PC-9 (cell line): ENCODE measurements at regions of chr2 and their contacts with region 1.

Region 1: DNA sequence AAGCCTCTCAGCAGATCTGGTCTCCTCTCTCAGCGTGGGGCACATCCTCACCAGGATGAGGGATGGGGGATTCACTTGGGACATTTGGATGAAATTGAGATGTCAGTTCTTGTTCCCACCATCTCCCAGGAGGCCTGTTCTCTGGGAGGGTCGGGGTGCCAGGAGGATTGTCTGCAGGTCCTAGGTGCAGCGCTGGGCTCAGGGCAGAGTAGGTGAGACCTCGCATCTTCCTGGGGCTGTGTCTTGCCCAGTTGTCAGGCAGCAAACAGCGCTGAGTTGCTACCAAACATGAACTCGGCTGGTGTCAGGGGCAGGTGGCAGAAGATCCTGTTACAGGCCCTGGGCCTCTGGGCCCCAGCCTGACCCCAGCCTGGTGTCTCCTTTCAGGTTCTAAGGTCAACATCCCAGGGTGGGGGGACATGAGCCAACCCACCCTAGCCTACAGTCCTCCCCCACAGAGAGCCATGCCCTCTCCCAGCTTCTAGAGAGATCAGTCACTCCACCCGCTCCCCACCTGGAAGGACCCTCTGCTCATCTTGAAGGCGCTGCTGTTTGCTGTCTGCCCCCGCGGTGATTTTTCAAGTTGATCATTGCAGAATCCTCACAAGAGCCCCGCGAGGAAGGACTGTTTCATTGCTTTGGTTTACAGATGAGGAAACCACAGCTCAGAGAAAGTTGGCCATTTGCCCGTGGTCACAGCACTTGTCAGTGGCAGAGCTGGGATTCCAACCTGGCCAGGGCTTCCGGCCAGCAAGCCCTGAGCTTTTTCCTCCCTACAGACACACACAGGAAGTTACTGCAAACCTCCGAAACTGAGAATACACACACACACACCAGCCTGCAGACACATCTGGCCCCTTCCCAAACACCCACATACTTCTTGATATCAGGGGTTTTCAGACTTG is 83.9 kb downstream of the STPG4 start:
- DNase-seq: peak; percentile 59 to 68
- H3K4me3 ChIP-seq: no peak overlapping the region
- H3K27ac ChIP-seq: peak overlapping the region; percentile 27
- H3K4me1 ChIP-seq: peaks cover 66% of the 10 kb centered on the region
- H3K27me3 ChIP-seq: no peaks in the 10 kb centered on the region
- CTCF ChIP-seq: no peak

Region 2: DNA sequence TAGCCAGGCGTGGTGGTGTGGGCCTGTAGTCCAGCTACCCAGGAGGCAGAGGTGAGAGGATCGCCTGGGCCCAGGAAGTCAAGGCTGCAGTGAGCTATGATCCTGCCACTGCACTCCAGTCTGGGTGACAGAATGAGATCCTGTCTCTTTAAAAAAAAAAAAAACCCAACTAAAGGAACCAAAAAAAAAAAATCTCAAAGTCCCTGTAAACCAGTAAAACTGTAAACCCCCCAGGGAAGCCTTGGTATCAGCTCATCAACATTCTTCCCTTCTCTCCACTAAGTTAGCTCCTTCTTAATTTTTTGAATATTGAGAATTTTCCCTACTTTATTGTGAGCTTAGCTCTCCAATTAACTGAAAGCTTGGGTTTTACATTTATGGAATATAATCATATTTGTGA is 147.1 kb before region 1 on chr2:
- CTCF ChIA-PET with region 1: interaction called, 6 read pairs
- POLR2A ChIA-PET with region 1: interaction called, 23 read pairs
- intact Hi-C with region 1: no loop called
- DNase-seq: no peak
- H3K4me3 ChIP-seq: no peak overlapping the region
- H3K27ac ChIP-seq: no peak overlapping the region
- H3K4me1 ChIP-seq: peaks cover 60% of the 10 kb centered on the region
- H3K27me3 ChIP-seq: no peaks in the 10 kb centered on the region
- CTCF ChIP-seq: 0 out of 2 replicates have a peak, but pooled peaks have one; percentile 2

Region 3: DNA sequence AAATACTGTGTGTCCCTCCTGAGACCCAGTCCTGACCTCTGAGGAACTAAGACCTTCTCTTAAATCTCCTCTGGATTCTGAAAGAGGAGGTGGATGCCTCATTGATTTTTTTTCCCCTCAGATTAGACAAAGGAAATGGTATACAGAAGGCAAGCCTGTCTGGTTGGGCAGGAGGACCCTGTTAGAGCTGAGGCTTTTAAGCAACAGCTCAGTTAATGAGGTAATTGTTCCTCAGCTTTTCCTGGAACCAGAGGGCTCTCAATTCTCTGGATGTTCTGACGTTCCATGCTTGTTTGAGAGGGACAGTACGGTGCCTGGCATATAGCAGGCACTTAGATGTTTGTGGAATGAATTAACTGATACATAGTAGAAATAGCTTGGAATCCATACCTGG is 93.9 kb before region 1 on chr2:
- CTCF ChIA-PET with region 1: no interaction called
- POLR2A ChIA-PET with region 1: no interaction called
- intact Hi-C with region 1: no loop called
- DNase-seq: no peak
- H3K4me3 ChIP-seq: no peak overlapping the region
- H3K27ac ChIP-seq: no peak overlapping the region
- H3K4me1 ChIP-seq: peaks cover 15% of the 10 kb centered on the region
- H3K27me3 ChIP-seq: no peaks in the 10 kb centered on the region
- CTCF ChIP-seq: no peak

Region 4: GRCh38 chr2:47043142-47043890 is 27.9 kb before region 1 on chr2:
- CTCF ChIA-PET with region 1: interaction called, 4 read pairs
- POLR2A ChIA-PET with region 1: interaction called, 9 read pairs
- intact Hi-C with region 1: loop called (anchors 1 kb)
- DNase-seq: peak; percentile 91 to 99
- H3K4me3 ChIP-seq: peak overlapping the region; percentile 45
- H3K27ac ChIP-seq: peak overlapping the region; percentile 89
- H3K4me1 ChIP-seq: peaks cover 65% of the 10 kb centered on the region
- H3K27me3 ChIP-seq: no peaks in the 10 kb centered on the region
- CTCF ChIP-seq: 0 out of 2 replicates have a peak, but pooled peaks have one; percentile 24

Region 5: DNA sequence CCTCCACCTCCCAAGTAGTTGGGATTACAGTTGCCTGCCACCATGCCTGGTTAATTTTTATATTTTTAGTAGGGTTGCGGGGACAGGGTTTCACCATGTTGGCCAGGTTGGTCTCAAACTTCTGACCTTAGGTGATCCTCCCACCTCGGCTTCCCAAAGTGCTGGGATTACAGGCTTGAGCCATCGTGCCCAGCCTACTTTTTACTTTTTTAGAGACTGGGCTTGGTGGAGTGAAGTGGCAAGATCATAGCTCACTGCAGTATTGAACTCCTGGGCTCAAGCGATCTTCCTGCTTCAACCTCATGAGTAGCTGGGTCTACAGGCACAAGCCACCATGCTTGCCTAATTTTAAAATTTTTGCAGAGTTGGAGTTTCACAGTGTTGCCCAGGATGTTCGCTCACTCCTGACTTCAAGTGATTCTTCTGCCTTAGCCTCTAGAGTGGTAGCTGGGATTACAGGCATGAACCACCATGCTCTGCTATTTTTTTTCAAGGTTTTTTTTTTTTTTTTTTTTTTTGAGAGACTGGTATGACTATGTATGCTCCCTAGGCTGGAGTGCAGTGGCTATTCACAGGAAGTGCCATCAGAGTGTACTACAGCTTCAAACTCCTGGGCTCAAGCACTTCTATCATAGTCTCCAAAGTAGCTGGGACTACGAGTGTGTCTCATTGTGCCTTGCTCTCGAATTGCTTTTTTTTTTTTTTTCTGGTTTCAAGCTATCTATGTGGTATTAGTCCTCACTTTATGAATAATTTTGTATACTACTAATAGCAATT is 343.7 kb after region 1 on chr2:
- CTCF ChIA-PET with region 1: interaction called, 12 read pairs
- POLR2A ChIA-PET with region 1: no interaction called
- intact Hi-C with region 1: no loop called
- DNase-seq: no peak
- H3K4me3 ChIP-seq: no peak overlapping the region
- H3K27ac ChIP-seq: no peak overlapping the region
- H3K4me1 ChIP-seq: no peaks in the 10 kb centered on the region
- H3K27me3 ChIP-seq: no peaks in the 10 kb centered on the region
- CTCF ChIP-seq: no peak

Region 6: DNA sequence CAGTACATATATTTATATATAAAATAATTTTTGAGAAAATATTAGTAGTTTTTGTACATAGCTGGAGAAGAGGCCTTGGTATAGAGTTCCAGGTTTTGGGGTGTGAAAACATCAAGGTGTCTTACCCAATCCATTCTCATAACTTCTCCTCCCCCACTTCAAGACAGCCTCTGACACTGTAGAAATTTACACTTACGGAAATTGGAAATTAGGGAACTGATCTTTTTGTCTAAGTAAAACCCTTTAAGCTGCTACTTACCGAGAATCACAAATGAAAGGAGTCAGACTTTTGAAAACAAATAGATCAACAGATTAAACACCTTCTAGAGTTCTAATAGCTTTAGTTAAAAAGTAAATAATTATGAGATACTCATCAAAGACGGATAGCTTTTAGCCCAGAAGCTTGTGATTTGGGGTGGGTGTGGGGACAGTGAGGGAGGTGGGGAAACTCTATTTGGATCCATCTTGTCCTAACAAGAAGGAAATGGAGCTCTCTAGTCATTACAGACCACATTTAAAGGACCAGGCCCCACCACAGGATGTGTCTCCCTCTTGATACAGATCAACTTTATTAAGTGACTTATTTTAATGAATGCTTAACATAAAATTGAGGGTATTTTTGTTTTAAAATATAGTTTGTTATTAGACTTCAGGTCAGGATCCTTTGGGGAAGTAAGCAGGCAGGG is 846.2 kb after region 1 on chr2:
- CTCF ChIA-PET with region 1: no interaction called
- POLR2A ChIA-PET with region 1: no interaction called
- intact Hi-C with region 1: no loop called
- DNase-seq: no peak
- H3K4me3 ChIP-seq: no peak overlapping the region
- H3K27ac ChIP-seq: no peak overlapping the region
- H3K4me1 ChIP-seq: no peaks in the 10 kb centered on the region
- H3K27me3 ChIP-seq: no peaks in the 10 kb centered on the region
- CTCF ChIP-seq: no peak